Vagina (tissue), 2 donors: ENCODE measurements at regions of chr5 and their contacts with region 1.

Region 1: DNA sequence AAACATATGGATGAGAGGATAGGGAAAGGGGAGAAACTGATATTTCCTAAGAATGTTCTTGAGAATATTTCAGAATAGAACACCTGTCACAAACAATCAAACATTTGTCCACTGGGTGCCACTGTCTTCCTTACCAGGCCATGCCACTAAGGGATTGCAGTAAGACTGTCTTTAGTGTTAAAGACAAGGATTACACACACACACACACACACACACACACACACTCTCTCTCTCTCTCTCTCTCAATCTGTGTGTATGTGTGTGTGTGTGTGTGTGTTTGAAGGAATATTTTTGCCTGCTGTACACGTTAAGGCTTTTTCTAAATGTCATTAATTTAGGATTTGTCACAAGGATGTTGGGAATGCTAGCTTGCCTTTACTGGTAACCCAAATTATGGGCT is 54.4 kb downstream of the CCDC192 start:
- DNase-seq: no peak
- H3K4me3 ChIP-seq: no peak overlapping the region
- H3K27ac ChIP-seq: no peak overlapping the region
- H3K4me1 ChIP-seq: no peaks in the 10 kb centered on the region
- H3K27me3 ChIP-seq: no peaks in the 10 kb centered on the region
- CTCF ChIP-seq: peak in 1 of 3 experiments; percentile 19
- POLR2A ChIP-seq: no peak

Region 2: GRCh38 chr5:127739807-127740384 is 17.7 kb before region 1 on chr5:
- intact Hi-C with region 1: no loop called
- DNase-seq: no peak
- H3K4me3 ChIP-seq: no peak overlapping the region
- H3K27ac ChIP-seq: no peak overlapping the region
- H3K4me1 ChIP-seq: no peaks in the 10 kb centered on the region
- H3K27me3 ChIP-seq: no peaks in the 10 kb centered on the region
- CTCF ChIP-seq: no peak
- POLR2A ChIP-seq: no peak

Region 3: GRCh38 chr5:128201065-128201926 is 443.7 kb after region 1 on chr5:
- intact Hi-C with region 1: loop called (anchors 10 kb)
- DNase-seq: no peak
- H3K4me3 ChIP-seq: no peak overlapping the region
- H3K27ac ChIP-seq: no peak overlapping the region
- H3K4me1 ChIP-seq: no peaks in the 10 kb centered on the region
- H3K27me3 ChIP-seq: no peaks in the 10 kb centered on the region
- CTCF ChIP-seq: peak; percentile 61 to 84 (median 79)
- POLR2A ChIP-seq: no peak